ENCODE measurements at regions of chr1 and their contacts with region 1.

Region 1: GRCh38 chr1:114979278-114979891 is 50.2 kb upstream of the TSHB start:
- DNase-seq: peak in 1 of 2 donors; percentile 58
- ATAC-seq: no peak
- H3K4me3 ChIP-seq: no peak overlapping the region
- H3K27ac ChIP-seq: no peak overlapping the region
- H3K4me1 ChIP-seq: no peaks in the 10 kb centered on the region
- H3K27me3 ChIP-seq: peaks cover 0 to 32% (median 9%) of the 10 kb centered on the region in 7 donors
- CTCF ChIP-seq: peak; percentile 73 to 89 (median 83)

Region 2: DNA sequence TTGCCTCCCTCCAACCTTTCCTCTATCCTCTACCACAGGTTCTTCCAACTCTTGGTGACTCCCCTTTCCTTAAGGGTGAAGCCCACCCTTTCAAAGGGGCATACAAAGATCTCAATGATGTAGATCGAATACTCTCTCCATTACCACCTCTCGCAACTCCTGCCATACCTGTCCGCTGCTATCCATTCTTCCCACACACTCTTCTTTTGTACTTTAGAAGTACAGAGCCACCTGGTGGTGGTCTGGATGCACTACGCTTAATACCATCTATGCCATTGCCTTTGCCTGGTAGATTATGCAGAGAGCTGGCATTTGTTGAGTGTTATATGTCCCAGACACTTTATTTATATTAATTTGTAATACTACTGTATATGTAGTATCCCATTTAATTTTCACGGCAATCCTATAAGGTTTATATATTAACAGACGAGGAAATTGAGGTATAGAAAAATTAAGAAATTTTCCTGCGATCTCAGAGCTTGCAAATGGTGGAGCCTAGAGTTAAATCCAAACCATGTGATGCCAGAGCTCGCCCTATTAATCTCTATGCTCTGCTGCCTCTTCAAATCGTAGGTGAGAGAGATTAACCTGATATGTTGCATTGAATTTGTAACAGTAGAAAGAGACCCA is 73.2 kb after region 1 on chr1:
- intact Hi-C with region 1: loop called in 8 of 10 experiments (anchors 2 to 5 kb)
- DNase-seq: peak in 1 of 2 donors; percentile 35
- ATAC-seq: peak in 5 of 8 donors; percentile 55 to 78 (median 69)
- H3K4me3 ChIP-seq: no peak overlapping the region
- H3K27ac ChIP-seq: no peak overlapping the region
- H3K4me1 ChIP-seq: no peaks in the 10 kb centered on the region
- H3K27me3 ChIP-seq: no peaks in the 10 kb centered on the region
- CTCF ChIP-seq: peak; percentile 44 to 87 (median 84)

Region 3: DNA sequence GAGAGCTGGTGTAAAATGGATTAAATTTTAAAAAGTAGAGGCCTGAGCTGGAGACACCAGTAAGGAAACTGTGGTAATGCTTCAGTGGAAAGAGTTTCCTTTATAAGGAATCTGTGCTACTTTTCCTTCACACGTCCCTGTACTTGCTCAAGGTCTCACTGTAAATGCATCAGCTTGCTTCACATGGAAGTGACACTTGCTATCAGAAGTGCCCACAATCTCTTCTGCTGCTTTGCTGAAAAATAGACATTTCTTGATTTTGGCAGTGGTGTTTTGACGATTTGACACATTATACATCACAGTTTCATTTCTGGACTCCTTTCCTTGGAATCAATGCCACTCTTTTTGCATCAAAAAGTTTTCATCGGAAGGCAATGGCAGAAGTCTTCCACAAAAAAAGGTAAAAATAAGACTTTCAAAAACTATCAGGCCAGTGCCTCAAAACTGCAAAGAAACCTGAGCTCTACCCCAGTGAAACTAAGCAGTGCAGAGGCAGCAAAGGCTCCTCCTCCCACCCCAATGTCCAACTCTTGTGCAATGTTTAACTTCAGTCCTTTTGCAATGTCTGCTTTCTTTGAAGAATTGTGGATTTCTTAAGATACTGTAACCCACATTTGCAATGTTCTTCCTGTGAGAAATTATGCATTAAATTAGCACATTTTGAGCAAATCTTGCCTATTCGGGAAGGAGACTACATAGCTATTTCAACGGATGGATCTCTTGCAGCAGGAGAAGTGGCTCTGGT is 128.3 kb after region 1 on chr1:
- intact Hi-C with region 1: loop called in 8 of 10 experiments (anchors 1 to 5 kb)
- DNase-seq: no peak
- ATAC-seq: peak in 1 of 8 donors; percentile 48
- H3K4me3 ChIP-seq: no peak overlapping the region
- H3K27ac ChIP-seq: peak overlapping the region in 1 of 10 donors; percentile 53
- H3K4me1 ChIP-seq: peaks cover 0 to 23% (median 0%) of the 10 kb centered on the region in 9 donors
- H3K27me3 ChIP-seq: no peaks in the 10 kb centered on the region
- CTCF ChIP-seq: no peak

Region 4: DNA sequence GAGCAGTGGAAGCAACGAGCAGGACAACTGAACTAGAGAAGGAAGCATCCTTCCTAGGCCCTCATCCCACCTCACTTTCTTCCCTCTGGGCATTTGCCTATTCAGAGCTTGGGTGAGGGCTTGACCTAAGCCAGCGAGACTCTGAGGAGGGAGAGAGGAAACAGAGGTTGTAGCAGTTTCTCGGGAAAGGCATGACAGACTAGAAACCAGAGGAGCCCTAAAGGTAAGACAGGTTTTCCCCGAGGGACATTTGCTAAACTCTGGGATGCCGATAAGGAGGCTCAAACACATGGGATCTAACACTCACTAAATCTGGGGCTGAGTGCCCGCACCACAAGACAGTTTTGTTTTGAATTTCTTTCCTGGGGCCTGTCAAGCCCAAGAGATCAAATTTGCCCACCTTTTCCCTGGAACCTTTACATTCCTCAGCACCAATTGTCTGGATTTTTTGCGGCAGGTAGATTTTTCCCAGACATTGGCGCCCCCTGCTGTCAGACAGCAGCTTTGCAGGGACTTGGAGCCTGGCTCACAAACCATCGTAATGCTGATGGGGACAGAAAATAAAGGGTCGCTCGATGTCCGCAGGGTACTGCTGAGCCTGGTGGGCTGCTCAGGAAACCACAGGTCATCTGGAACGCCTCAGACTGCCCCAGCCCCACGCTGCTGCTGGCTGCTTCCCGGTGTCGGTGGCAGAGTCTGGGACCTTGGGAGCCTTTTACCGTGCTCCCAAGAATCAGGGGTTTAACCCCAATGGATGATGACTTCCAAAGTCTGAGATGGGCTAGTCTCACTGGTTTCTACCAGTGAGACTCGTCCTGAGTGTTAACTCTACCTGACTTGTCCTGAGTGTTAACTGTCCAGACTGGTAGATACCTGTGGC is 133.4 kb after region 1 on chr1:
- intact Hi-C with region 1: loop called (anchors 1 to 5 kb)
- DNase-seq: peak; percentile 23 to 43
- ATAC-seq: peak; percentile 19 to 62 (median 44)
- H3K4me3 ChIP-seq: no peak overlapping the region
- H3K27ac ChIP-seq: no peak overlapping the region
- H3K4me1 ChIP-seq: peaks cover 0 to 16% (median 0%) of the 10 kb centered on the region in 9 donors
- H3K27me3 ChIP-seq: peaks cover 0 to 6% (median 0%) of the 10 kb centered on the region in 7 donors
- CTCF ChIP-seq: peak; percentile 90 to 96 (median 95)

Region 5: DNA sequence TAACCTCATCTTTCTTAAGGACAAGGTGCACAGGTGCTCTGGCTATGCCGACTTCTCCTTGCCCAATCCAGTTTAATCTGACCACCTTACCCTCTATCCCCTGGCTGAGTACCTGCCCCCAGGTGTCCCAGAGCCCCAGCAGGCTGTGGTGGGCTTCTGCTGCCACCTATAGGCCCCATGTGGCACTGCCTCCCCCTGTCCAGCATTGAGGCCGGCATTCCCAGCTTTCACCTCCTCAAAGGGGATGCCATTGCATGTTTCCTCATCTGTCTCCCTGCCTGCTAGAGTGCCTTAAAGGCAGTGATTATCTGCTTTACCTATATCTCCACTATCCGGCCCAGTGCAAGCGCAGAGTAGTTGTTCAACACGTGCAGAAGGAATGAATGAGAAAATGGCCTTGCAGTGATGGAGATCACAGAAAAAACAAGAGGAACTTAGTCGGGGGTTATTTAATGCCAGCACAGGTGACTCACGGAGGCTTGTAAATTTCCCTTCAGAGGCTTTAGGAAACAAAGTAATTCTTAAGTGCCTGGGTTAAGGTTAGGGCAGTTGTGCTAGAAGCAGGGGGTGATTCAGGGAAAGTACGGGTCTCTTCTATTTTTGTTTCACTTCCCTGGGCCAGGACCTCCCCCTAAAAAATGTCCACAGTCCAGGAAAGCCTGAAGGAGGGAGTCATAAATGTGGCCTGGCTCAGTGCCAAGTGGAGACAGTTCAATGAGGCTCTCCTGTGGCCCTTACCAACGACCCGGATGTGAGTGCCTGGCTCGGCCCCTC is 490.5 kb after region 1 on chr1:
- intact Hi-C with region 1: loop called in 2 of 10 experiments (anchors 10 kb)
- DNase-seq: peak; percentile 22 to 42
- ATAC-seq: peak in 7 of 8 donors; percentile 38 to 67 (median 58)
- H3K4me3 ChIP-seq: no peak overlapping the region
- H3K27ac ChIP-seq: no peak overlapping the region
- H3K4me1 ChIP-seq: peaks cover 0 to 14% (median 0%) of the 10 kb centered on the region in 9 donors
- H3K27me3 ChIP-seq: peaks cover 0 to 4% (median 0%) of the 10 kb centered on the region in 7 donors
- CTCF ChIP-seq: peak; percentile 66 to 89 (median 83)

Region 6: DNA sequence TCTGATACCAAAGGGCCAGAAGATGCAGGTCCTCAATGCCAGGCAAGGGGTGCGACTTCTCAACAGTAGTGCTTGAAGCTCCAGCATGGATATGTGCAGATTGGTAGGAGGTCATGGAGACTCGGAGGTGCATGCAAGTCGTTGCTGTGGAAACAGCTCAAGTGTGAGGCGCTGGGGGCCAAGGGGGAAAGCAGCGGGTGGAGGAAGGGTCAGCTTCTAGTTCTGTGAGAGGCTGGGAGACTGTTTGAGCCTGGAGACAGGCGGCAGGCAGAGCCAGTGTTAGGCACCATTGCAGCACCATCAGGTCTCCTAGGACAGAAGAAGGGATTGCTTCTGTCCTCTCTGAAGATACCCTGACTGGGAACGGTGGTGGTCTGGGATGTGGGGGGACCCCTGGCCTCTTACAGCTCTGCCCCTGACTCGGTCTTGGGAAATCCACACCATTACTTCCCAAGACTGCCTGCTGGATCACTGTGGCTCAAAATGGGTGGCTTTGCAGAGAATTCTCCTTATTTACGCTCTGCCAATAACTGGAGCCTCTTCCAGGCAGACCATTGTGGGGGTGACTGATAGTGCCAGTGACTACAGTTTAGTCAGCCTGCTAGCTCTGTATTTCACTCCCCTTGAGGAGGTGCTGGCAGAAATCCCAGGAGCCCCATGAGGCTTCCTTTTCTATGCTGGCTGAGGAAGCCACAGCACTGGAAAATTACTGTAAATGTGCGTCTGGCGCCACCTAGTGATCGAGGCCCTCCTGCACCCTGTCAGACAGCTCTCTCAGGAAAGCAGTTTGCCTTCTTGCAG is 616.1 kb after region 1 on chr1:
- intact Hi-C with region 1: loop called in 5 of 10 experiments (anchors 2 to 10 kb)
- DNase-seq: peak; percentile 88 to 93
- ATAC-seq: peak; percentile 85 to 94 (median 92)
- H3K4me3 ChIP-seq: no peak overlapping the region
- H3K27ac ChIP-seq: peak overlapping the region in 1 of 10 donors; percentile 18
- H3K4me1 ChIP-seq: peaks cover 4 to 34% (median 11%) of the 10 kb centered on the region in 9 donors
- H3K27me3 ChIP-seq: no peaks in the 10 kb centered on the region
- CTCF ChIP-seq: peak; percentile 86 to 96 (median 94)